Mammary epithelial cell (primary cell): ENCODE measurements at regions of chr2 and their contacts with region 1.

Region 1: GRCh38 chr2:97095661-97096060 is 979 bp upstream of the FAHD2B start:
- DNase-seq: no peak
- H3K4me3 ChIP-seq: no peak overlapping the region
- H3K27ac ChIP-seq: no peak overlapping the region
- H3K4me1 ChIP-seq: no peaks in the 10 kb centered on the region
- H3K27me3 ChIP-seq: no peaks in the 10 kb centered on the region
- CTCF ChIP-seq: no peak

Region 2: GRCh38 chr2:95530734-95531133 is 1564.9 kb before region 1 on chr2:
- CTCF ChIA-PET with region 1: no interaction called
- dilution Hi-C with region 1: no loop called
- in situ Hi-C with region 1: no loop called
- intact Hi-C with region 1: no loop called
- DNase-seq: no peak
- H3K4me3 ChIP-seq: no peak overlapping the region
- H3K27ac ChIP-seq: no peak overlapping the region
- H3K4me1 ChIP-seq: peaks cover 10% of the 10 kb centered on the region
- H3K27me3 ChIP-seq: no peaks in the 10 kb centered on the region
- CTCF ChIP-seq: no peak

Region 3: DNA sequence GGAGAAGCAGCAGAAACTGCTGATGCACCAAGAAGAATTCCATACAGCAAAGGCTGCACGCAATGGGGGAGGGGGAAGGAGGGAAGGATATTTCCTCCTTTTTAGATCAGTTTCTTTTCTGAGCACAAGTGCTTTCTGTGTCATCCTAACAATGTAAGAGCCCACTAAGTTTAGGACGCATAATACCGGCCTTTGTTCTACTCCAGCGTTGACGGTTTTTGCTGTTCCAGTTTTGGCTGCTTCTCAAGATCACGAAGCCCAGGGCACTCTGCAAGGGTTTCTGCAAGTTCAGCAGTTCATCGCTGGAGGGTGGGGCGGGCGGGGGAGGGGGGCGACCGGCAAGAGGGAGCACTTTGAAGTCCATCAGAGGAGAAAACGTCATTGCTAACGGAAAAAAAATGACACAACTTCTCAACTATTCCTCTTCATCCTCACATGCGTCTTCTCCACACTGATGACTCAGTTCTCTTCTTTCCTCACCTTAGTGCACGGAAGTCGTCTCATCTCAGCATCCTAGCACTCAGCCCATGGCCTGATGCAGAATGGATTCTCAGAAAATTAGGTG is 117.9 kb before region 1 on chr2:
- CTCF ChIA-PET with region 1: no interaction called
- dilution Hi-C with region 1: no loop called
- in situ Hi-C with region 1: loop called in 1 of 2 experiments (anchors 25 kb)
- intact Hi-C with region 1: no loop called
- DNase-seq: peak; percentile 82
- H3K4me3 ChIP-seq: no peak overlapping the region
- H3K27ac ChIP-seq: no peak overlapping the region
- H3K4me1 ChIP-seq: peaks cover 6% of the 10 kb centered on the region
- H3K27me3 ChIP-seq: no peaks in the 10 kb centered on the region
- CTCF ChIP-seq: no peak

Region 4: GRCh38 chr2:98280376-98281102 is 1184.9 kb after region 1 on chr2:
- CTCF ChIA-PET with region 1: no interaction called
- dilution Hi-C with region 1: no loop called
- in situ Hi-C with region 1: no loop called
- intact Hi-C with region 1: no loop called
- DNase-seq: no peak
- H3K4me3 ChIP-seq: no peak overlapping the region
- H3K27ac ChIP-seq: no peak overlapping the region
- H3K4me1 ChIP-seq: peaks cover 3% of the 10 kb centered on the region
- H3K27me3 ChIP-seq: peaks cover 1% of the 10 kb centered on the region
- CTCF ChIP-seq: no peak